ENCODE measurements at regions of chr10 and their contacts with region 1.

Region 1: DNA sequence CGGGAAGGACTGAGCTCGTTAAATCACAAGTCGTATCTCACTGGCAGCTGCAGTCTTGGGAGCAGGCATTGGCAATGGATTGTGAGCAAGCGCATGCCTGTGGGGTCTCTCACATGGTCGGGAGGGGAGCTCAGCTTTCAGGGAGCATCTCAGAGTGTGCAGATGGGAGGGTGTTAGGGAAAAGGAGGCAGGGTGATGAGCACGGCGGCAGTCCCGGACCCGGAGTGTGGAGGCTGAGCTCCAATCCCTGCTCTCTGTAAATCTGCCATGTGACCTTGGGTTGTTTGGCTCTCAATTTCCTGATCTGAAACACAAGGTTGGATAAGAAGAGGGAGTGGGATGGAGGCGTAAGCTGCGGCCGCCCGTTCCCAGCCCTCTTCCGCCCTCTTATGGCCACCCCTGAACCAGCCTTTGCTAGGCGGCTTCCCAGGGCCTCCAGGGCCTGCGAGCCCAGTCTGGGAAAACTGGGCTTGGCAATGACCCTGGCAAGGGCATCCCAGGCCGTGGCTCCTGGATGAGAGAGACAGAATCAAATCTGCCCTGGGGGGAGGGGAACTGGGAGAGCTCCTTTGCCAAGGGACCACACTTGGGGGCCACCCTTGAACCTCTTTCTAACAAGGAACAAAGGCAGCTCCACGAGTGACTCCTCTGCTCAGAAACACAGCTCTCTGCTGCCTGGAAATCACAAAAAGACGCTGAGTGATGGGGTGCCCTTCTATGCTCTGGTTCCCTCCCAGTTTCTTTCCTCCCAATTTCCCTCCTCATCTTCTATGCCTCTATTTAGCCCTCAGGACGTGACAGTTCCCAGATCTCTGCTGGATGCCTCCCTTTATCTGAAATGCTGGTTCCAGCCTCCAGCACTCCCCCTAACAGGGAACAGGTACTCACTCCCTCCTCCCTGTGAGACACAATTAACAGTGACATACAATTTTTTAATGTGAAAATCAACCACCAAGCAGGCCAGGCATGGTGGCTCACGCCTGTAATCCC is 41.7 kb upstream of the LOXL4 start:
- DNase-seq: peak; percentile 44 to 82 (median 73)
- ATAC-seq: peak; percentile 90 to 98 (median 97)
- H3K4me3 ChIP-seq: no peak overlapping the region
- H3K27ac ChIP-seq: no peak overlapping the region
- H3K4me1 ChIP-seq: no peaks in the 10 kb centered on the region
- H3K27me3 ChIP-seq: no peaks in the 10 kb centered on the region
- CTCF ChIP-seq: peak; percentile 45 to 69 (median 66)

Region 2: GRCh38 chr10:98170249-98171117 is 139.2 kb before region 1 on chr10:
- intact Hi-C with region 1: loop called in 1 of 3 experiments (anchors 10 kb)
- DNase-seq: peak in 5 of 6 donors; percentile 15 to 54 (median 24)
- ATAC-seq: peak; percentile 82 to 96 (median 92)
- H3K4me3 ChIP-seq: no peak overlapping the region
- H3K27ac ChIP-seq: no peak overlapping the region
- H3K4me1 ChIP-seq: no peaks in the 10 kb centered on the region
- H3K27me3 ChIP-seq: no peaks in the 10 kb centered on the region
- CTCF ChIP-seq: peak; percentile 59 to 79 (median 65)

Region 3: DNA sequence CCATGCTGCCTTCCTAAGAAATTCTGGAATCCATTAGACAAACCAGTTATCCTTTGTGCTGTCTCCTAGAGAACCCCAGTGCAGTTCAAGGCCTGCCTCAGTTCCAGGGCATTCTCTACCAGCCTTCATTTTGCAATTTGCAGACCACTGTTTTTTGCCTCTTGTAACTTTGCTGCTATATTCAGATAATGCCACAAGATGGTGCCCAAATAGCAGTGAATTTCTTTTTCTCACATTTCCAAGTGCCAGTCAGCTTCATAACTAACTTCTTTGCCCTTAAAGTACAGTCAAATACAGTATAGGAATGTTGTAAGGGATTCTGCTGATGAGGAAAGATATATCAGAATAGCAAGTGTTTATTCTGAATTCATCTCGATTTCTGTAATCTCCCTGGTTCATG is 66.8 kb before region 1 on chr10:
- intact Hi-C with region 1: loop called in 1 of 3 experiments (anchors 10 kb)
- DNase-seq: no peak
- ATAC-seq: peak in 1 of 4 donors; percentile 36
- H3K4me3 ChIP-seq: no peak overlapping the region
- H3K27ac ChIP-seq: no peak overlapping the region
- H3K4me1 ChIP-seq: no peaks in the 10 kb centered on the region
- H3K27me3 ChIP-seq: no peaks in the 10 kb centered on the region
- CTCF ChIP-seq: no peak

Region 4: GRCh38 chr10:98262571-98262970 is 47.1 kb before region 1 on chr10:
- intact Hi-C with region 1: loop called in 1 of 3 experiments (anchors 5 kb)
- DNase-seq: peak; percentile 53 to 81 (median 64)
- ATAC-seq: peak; percentile 55 to 80 (median 60)
- H3K4me3 ChIP-seq: no peak overlapping the region
- H3K27ac ChIP-seq: no peak overlapping the region
- H3K4me1 ChIP-seq: no peaks in the 10 kb centered on the region
- H3K27me3 ChIP-seq: no peaks in the 10 kb centered on the region
- CTCF ChIP-seq: peak in 2 of 4 donors; percentile 13 to 23

Region 5: DNA sequence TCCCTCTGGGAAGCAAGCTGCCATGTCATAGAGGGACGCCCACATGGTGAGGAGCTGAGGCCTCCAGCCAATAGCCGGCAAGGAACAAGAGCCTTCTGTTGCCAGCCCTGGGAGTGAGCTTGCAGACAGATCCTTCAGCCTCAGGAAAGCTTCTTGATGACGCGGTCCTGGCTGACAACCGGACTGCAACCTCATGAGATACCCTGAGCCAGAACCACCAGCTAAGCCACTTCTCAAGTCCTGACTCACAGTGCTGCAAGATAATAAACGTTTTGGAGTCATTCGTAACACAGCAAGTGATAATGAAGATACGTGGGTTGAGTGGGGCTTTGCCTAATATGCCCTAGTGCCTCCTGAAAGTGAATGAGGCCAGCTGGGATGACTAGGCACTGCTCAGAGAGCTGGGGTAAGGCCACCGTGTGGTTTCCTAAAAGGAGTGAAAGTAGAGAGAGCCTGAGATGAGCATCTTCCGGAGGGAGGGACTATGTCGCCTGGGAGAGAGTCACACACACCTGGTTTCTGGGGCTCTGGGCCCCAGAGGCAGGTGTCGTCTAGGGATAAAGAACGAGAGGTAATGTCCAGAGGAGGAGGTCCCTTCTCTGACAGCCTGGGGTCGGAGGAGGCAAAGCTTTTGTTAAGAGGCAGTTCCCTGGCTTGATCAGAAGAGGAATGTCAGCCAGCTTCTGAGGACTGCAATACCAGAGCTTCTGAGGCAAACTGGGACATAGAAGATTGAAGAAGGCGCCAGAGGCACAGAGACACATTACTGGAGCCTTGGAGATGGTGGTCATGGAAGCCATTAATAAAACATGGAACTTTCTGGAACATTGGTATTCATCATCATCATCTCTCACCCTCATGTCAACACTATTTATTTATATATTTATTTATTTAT is 51.7 kb after region 1 on chr10:
- intact Hi-C with region 1: no loop called
- DNase-seq: peak in 2 of 6 donors; percentile 12 to 21
- ATAC-seq: peak in 2 of 4 donors; percentile 50 to 62
- H3K4me3 ChIP-seq: no peak overlapping the region
- H3K27ac ChIP-seq: no peak overlapping the region
- H3K4me1 ChIP-seq: no peaks in the 10 kb centered on the region
- H3K27me3 ChIP-seq: no peaks in the 10 kb centered on the region
- CTCF ChIP-seq: no peak

Measured in pancreas (tissue), 10 donors.